CD8-positive, alpha-beta memory T cell (primary cell): ENCODE measurements at regions of chr11 and their contacts with region 1.

Region 1: GRCh38 chr11:67401495-67402191 is at the start of gene PPP1CA:
- DNase-seq: peak; percentile 87 to 93 (median 92)
- H3K4me3 ChIP-seq: peak within 1 kb of the TSS; percentile 88
- H3K4me3 Mint-ChIP-seq: peak within 1 kb of the TSS; percentile 89 to 99 (median 95)
- H3K27ac ChIP-seq: peak within 1 kb of the TSS; percentile 87
- H3K27ac Mint-ChIP-seq: peak within 1 kb of the TSS; percentile 78 to 98 (median 93)
- H3K4me1 ChIP-seq: peaks cover 74% of the 10 kb centered on the region
- H3K4me1 Mint-ChIP-seq: peaks cover 40 to 82% (median 53%) of the 10 kb centered on the region in 3 donors
- H3K27me3 ChIP-seq: no peaks in the 10 kb centered on the region
- H3K27me3 Mint-ChIP-seq: no peaks in the 10 kb centered on the region
- total RNA-seq, gene PPP1CA: 338 to 357 TPM

Region 2: DNA sequence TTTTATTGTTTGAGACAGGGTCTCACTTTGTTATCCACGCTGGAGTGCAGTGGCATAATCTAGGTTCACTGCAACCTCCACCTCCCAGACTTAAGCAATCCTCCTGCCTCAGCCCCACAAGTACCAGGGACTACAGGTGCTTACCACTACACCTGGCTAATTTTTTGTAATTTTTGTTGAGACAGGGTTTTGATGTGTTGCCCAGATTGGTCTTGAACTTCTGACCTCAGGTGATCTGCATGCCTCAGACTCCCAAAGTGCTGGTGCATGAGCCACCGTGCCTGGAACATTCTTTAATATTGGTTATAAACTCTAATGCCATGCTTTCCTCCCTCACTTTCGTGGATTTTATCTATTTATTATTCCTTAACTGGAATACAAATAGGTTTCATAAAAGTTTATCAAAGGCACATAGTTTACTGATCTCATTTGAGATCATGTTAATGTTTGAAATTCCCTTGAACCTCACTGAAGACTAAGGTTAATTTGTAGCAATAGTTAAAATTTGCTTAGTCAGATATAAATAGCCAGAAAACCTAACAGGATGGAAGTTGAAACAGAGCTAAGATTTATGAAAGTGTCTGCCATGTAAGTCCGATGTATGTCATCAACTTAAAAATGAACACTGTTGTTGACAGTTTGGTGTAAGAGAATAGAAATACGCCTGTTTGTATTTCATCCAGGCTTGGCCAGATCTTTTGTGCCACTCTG is 255.0 kb before region 1 on chr11:
- CTCF ChIA-PET with region 1: no interaction called
- POLR2A ChIA-PET with region 1: no interaction called
- DNase-seq: no peak
- H3K4me3 ChIP-seq: no peak overlapping the region
- H3K4me3 Mint-ChIP-seq: peak overlapping the region in 1 of 7 donors; percentile 41
- H3K27ac ChIP-seq: no peak overlapping the region
- H3K27ac Mint-ChIP-seq: peak overlapping the region in 5 of 8 donors; percentile 13 to 50 (median 45)
- H3K4me1 ChIP-seq: no peaks in the 10 kb centered on the region
- H3K4me1 Mint-ChIP-seq: peaks cover 8 to 33% (median 9%) of the 10 kb centered on the region in 3 donors
- H3K27me3 ChIP-seq: no peaks in the 10 kb centered on the region
- H3K27me3 Mint-ChIP-seq: no peaks in the 10 kb centered on the region

Region 3: DNA sequence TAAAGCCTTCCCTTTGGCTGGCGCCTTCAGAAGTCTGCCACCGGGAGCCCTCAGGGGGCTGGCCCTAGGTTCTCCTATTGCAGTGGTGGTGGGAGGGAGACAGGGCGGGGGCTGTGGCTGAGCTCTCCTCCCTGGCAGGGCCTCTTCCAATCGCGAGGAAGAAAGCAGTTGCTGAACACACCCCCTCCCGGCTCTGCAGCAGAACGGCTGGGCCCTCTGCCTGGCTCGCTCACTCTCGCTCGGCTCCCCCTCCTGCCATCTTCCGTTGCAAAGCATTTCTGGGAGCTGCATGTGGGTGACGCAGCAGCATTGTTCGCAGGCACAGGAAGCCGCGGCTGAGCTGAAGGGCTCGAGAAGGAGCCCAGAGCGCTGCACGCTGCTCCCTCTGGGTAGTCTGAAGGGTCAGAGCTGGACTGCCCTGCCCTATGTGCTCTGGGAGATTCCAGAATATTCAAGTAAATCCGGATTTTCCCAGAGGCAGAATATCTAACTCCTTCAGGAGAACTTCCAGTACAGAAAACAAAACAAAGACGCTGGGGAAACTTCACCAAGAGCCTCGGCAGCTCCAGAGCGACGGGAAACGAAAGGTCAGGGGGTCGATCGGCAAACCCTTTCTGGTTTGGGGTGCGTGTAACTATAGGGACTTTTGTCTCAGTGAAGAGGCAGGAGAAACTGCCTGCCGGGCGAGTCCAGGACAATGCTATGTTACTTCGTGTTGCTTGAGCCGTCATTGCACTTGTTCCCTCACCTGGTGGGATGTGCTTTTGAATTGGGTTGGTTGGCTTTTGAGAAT is 161.7 kb before region 1 on chr11:
- CTCF ChIA-PET with region 1: no interaction called
- POLR2A ChIA-PET with region 1: interaction called, 11 read pairs
- DNase-seq: peak; percentile 94 to 98 (median 97)
- H3K4me3 ChIP-seq: peak overlapping the region; percentile 98
- H3K4me3 Mint-ChIP-seq: peak overlapping the region; percentile 94 to 100 (median 99)
- H3K27ac ChIP-seq: peak overlapping the region; percentile 99
- H3K27ac Mint-ChIP-seq: peak overlapping the region; percentile 97 to 100 (median 99)
- H3K4me1 ChIP-seq: peaks cover 48% of the 10 kb centered on the region
- H3K4me1 Mint-ChIP-seq: peaks cover 50 to 58% (median 57%) of the 10 kb centered on the region in 3 donors
- H3K27me3 ChIP-seq: no peaks in the 10 kb centered on the region
- H3K27me3 Mint-ChIP-seq: peaks cover 0 to 4% of the 10 kb centered on the region in 2 donors

Region 4: DNA sequence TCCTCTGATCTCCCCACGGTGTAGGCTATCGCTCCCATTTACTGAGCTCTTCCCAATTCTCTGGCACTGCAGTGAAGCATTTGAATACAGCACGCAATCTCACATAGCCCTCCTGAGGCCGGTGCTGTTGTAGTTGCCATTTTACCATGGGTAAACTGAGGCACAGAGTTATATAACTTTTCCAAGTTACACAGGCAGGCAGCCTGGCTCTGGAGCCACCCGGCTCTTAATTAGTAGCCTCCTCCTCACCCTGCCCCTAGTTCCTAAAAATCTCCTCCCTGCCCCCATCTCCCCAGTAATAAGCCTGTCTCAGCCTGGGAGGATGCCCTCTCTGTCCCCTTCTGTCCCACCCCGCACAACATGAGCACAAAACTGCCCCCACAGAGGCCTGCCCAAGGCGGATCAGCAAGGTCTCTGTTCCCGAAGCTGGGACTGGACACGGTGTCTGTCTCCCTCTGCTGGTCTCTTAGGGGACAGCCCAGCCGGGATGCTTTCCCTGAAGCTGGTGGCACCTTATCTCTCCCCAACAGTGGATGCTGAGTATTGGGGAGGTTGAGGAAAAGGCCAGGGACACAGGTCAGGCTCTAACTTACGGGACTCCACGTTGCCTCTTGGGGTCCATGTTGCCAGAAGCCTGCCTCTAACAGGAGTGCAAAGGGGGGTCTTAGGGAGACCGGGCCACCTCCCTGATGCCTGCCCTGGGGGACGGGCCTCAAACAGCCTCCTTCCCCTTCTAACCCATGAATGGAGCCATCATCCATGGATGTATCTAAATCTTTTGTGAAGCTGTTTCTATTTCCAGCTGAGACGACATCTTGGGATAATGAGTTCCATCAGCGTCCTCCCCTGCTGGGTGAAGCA is 19.1 kb before region 1 on chr11:
- CTCF ChIA-PET with region 1: interaction called, 53 read pairs
- POLR2A ChIA-PET with region 1: interaction called, 3 read pairs
- DNase-seq: peak; percentile 76 to 88 (median 77)
- H3K4me3 ChIP-seq: no peak overlapping the region
- H3K4me3 Mint-ChIP-seq: no peak overlapping the region
- H3K27ac ChIP-seq: no peak overlapping the region
- H3K27ac Mint-ChIP-seq: peak overlapping the region in 6 of 8 donors; percentile 2 to 80 (median 72)
- H3K4me1 ChIP-seq: peaks cover 8% of the 10 kb centered on the region
- H3K4me1 Mint-ChIP-seq: peaks cover 5 to 16% (median 11%) of the 10 kb centered on the region in 3 donors
- H3K27me3 ChIP-seq: peaks cover 5% of the 10 kb centered on the region
- H3K27me3 Mint-ChIP-seq: peaks cover 0 to 3% of the 10 kb centered on the region in 2 donors

Region 5: DNA sequence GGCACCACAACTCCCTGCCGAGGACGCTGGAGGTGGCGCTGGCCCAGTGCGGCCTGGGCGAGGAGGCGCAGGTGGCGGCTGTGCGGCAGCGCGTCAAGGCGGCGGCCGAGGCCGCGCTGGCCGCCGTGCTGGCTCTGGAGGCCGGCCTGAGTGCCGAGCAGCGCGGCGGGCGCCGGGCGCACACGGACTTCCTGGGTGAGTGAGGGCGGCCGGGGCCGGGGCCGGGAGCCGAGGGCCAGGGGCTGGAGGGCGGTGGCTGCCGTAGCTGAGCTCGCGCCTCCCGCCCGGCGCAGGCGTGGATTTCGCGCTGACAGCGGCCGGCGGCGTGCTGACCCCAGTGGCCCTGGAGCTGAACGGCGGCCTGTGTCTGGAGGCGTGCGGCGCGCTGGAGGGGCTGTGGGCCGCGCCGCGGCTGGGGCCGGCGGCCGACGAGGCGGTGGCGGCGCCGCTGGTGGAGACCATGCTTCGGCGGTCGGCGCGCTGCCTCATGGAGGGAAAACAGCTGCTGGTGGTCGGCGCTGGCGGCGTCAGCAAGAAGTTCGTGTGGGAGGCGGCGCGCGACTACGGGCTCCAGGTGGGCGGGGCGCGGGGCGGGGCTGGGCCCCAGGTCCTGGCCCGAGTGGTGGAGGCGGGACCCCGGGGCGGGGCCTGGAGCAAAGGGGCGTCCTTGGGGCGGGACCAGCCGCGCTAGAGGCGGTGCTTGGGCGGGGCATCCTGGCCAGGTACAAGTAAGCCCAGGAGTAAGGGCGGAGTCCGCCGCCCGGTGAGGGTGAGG is 19.2 kb after region 1 on chr11:
- CTCF ChIA-PET with region 1: interaction called, 108 read pairs
- POLR2A ChIA-PET with region 1: interaction called, 111 read pairs
- DNase-seq: peak; percentile 97 to 99 (median 98)
- H3K4me3 ChIP-seq: peak overlapping the region; percentile 58
- H3K4me3 Mint-ChIP-seq: peak overlapping the region; percentile 70 to 90 (median 83)
- H3K27ac ChIP-seq: peak overlapping the region; percentile 51
- H3K27ac Mint-ChIP-seq: peak overlapping the region; percentile 75 to 95 (median 88)
- H3K4me1 ChIP-seq: peaks cover 49% of the 10 kb centered on the region
- H3K4me1 Mint-ChIP-seq: peaks cover 43 to 62% (median 51%) of the 10 kb centered on the region in 3 donors
- H3K27me3 ChIP-seq: no peaks in the 10 kb centered on the region
- H3K27me3 Mint-ChIP-seq: peaks cover 0 to under 1% of the 10 kb centered on the region in 2 donors

Region 6: GRCh38 chr11:67468835-67469811 is 67.5 kb after region 1 on chr11 and contains the start of gene TMEM134:
- CTCF ChIA-PET with region 1: interaction called, 38 read pairs
- POLR2A ChIA-PET with region 1: interaction called, 22 read pairs
- DNase-seq: peak; percentile 86 to 95 (median 87)
- H3K4me3 ChIP-seq: peak within 1 kb of the TSS; percentile 74
- H3K4me3 Mint-ChIP-seq: peak within 1 kb of the TSS; percentile 87 to 92 (median 88)
- H3K27ac ChIP-seq: peak within 1 kb of the TSS; percentile 70
- H3K27ac Mint-ChIP-seq: peak within 1 kb of the TSS; percentile 64 to 94 (median 88)
- H3K4me1 ChIP-seq: peaks cover 34% of the 10 kb centered on the region
- H3K4me1 Mint-ChIP-seq: peaks cover 11 to 42% (median 29%) of the 10 kb centered on the region in 3 donors
- H3K27me3 ChIP-seq: no peaks in the 10 kb centered on the region
- H3K27me3 Mint-ChIP-seq: no peaks in the 10 kb centered on the region
- total RNA-seq, gene TMEM134: 49.6 to 57.9 TPM

Region 7: GRCh38 chr11:67489885-67490274 is 88.2 kb after region 1 on chr11:
- CTCF ChIA-PET with region 1: interaction called, 13 read pairs
- POLR2A ChIA-PET with region 1: interaction called, 18 read pairs
- DNase-seq: no peak
- H3K4me3 ChIP-seq: no peak overlapping the region
- H3K4me3 Mint-ChIP-seq: no peak overlapping the region
- H3K27ac ChIP-seq: no peak overlapping the region
- H3K27ac Mint-ChIP-seq: peak overlapping the region in 7 of 8 donors; percentile 36 to 93 (median 68)
- H3K4me1 ChIP-seq: peaks cover 35% of the 10 kb centered on the region
- H3K4me1 Mint-ChIP-seq: peaks cover 36 to 48% (median 36%) of the 10 kb centered on the region in 3 donors
- H3K27me3 ChIP-seq: no peaks in the 10 kb centered on the region
- H3K27me3 Mint-ChIP-seq: no peaks in the 10 kb centered on the region

Region 8: GRCh38 chr11:67516806-67517205 is 115.2 kb after region 1 on chr11:
- CTCF ChIA-PET with region 1: no interaction called
- POLR2A ChIA-PET with region 1: no interaction called
- DNase-seq: peak in 1 of 5 donors; percentile 31
- H3K4me3 ChIP-seq: no peak overlapping the region
- H3K4me3 Mint-ChIP-seq: no peak overlapping the region
- H3K27ac ChIP-seq: no peak overlapping the region
- H3K27ac Mint-ChIP-seq: no peak overlapping the region
- H3K4me1 ChIP-seq: no peaks in the 10 kb centered on the region
- H3K4me1 Mint-ChIP-seq: no peaks in the 10 kb centered on the region
- H3K27me3 ChIP-seq: no peaks in the 10 kb centered on the region
- H3K27me3 Mint-ChIP-seq: peaks cover 0 to 21% of the 10 kb centered on the region in 2 donors